ENCODE measurements at regions of chr6 and their contacts with region 1.

Region 1: DNA sequence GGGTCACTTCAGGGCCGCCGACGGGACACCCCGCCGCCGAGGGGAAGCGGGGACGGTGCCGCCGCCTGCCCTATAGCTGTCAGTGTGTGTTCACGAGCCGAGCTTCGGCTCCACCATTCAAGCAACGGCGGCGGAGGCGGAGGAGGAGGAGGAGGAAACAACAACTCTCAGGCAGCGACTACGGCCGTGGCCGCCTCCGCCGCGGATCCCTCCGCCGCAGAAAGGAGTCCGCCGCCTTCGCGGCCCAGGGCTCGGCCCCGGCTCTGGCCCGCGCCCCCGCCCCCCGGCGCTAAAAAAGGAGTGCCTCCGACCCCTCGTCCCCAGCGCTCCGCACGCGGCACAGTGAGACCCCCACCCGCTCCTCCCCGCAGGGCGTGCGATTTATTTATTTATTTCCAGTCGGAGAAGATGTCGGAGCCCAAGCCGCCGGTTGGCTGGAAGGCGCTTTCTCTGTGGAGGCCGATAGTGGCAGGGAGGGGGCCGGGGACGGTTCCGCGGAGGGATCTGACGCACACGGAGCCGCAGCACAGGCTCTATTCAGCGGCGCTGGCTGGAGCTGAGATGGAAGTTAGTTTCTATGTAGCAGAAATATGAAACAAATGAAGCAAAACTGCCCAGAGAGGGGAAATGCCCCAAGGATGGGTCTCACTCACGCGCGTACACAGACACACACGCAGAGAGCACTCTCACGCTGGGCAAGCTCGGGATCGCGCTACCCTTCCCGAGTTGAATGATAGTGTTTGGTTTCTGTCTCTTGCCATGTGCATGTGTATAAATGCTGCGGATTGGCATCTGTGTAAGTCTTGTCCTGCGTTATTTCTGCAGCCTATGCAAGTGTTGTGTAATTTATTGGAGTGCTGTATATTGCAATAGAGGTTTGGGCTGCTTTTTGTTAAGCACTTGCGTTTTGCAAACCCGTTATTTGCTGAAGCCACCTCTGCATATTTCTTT is at the start of gene PHIP:
- DNase-seq: peak; percentile 96
- H3K4me3 ChIP-seq: peak within 1 kb of the TSS; percentile 81 to 98 (median 90)
- H3K27ac ChIP-seq: peak within 1 kb of the TSS; percentile 84
- H3K4me1 ChIP-seq: peaks cover 20% of the 10 kb centered on the region
- H3K27me3 ChIP-seq: no peaks in the 10 kb centered on the region
- CTCF ChIP-seq: no peak
- POLR2A ChIP-seq: peak; percentile 70
- total RNA-seq, gene PHIP: 26.0 and 28.4 TPM in 2 replicates

Region 2: GRCh38 chr6:78850621-78851020 is 227.7 kb before region 1 on chr6:
- CTCF ChIA-PET with region 1: no interaction called
- POLR2A ChIA-PET with region 1: no interaction called
- dilution Hi-C with region 1: no loop called
- intact Hi-C with region 1: no loop called
- DNase-seq: no peak
- H3K4me3 ChIP-seq: no peak overlapping the region
- H3K27ac ChIP-seq: no peak overlapping the region
- H3K4me1 ChIP-seq: no peaks in the 10 kb centered on the region
- H3K27me3 ChIP-seq: no peaks in the 10 kb centered on the region
- CTCF ChIP-seq: no peak
- POLR2A ChIP-seq: no peak

Region 3: DNA sequence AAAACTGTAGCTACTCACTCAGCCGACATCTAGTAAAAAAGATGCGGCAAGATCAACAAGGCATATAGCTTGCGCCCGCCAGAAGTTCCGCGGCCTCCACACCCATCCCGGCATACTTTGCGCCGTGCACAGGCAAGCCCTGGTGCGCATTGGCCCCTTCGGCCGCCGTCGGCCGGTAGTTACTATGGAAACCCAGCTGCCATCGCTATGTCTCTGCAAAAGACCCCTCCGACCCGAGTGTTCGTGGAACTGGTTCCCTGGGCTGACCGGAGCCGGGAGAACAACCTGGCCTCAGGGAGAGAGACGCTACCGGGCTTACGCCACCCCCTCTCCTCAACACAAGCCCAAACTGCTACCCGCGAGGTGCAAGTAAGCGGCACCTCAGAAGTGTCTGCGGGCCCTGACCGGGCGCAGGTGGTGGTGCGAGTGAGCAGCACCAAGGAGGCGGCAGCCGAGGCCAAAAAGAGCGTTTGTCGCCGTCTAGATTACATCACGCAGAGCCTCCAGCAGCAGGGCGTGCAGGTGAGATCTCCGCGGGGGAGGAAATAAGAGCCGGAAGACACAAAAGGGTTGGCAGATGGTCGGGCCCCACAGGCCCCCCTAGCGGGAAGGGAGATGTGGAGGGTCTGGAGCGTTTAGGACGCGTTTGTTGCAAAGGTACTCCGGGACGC is 210.8 kb before region 1 on chr6 and contains the start of gene IRAK1BP1:
- CTCF ChIA-PET with region 1: no interaction called
- POLR2A ChIA-PET with region 1: no interaction called
- dilution Hi-C with region 1: no loop called
- intact Hi-C with region 1: loop called (anchors 1 kb)
- DNase-seq: peak; percentile 89
- H3K4me3 ChIP-seq: peak within 1 kb of the TSS; percentile 95 to 98 (median 95)
- H3K27ac ChIP-seq: peak within 1 kb of the TSS; percentile 58
- H3K4me1 ChIP-seq: peaks cover 8% of the 10 kb centered on the region
- H3K27me3 ChIP-seq: no peaks in the 10 kb centered on the region
- CTCF ChIP-seq: peak; percentile 16 to 46
- POLR2A ChIP-seq: peak; percentile 81
- total RNA-seq, gene IRAK1BP1: 2.7 and 3.0 TPM in 2 replicates

Region 4: GRCh38 chr6:79421707-79422484 is 343.5 kb after region 1 on chr6:
- CTCF ChIA-PET with region 1: no interaction called
- POLR2A ChIA-PET with region 1: no interaction called
- dilution Hi-C with region 1: no loop called
- intact Hi-C with region 1: loop called (anchors 1 kb)
- DNase-seq: peak; percentile 99
- H3K4me3 ChIP-seq: no peak overlapping the region
- H3K27ac ChIP-seq: peak overlapping the region; percentile 24
- H3K4me1 ChIP-seq: peaks cover 17% of the 10 kb centered on the region
- H3K27me3 ChIP-seq: no peaks in the 10 kb centered on the region
- CTCF ChIP-seq: no peak
- POLR2A ChIP-seq: no peak

Region 5: GRCh38 chr6:79544939-79545450 is 466.6 kb after region 1 on chr6:
- CTCF ChIA-PET with region 1: interaction called, 7 read pairs
- POLR2A ChIA-PET with region 1: no interaction called
- dilution Hi-C with region 1: no loop called
- intact Hi-C with region 1: loop called (anchors 2 kb)
- DNase-seq: peak; percentile 99
- H3K4me3 ChIP-seq: no peak overlapping the region
- H3K27ac ChIP-seq: peak overlapping the region; percentile 86
- H3K4me1 ChIP-seq: peaks cover 24% of the 10 kb centered on the region
- H3K27me3 ChIP-seq: no peaks in the 10 kb centered on the region
- CTCF ChIP-seq: peak; percentile 60 to 62
- POLR2A ChIP-seq: peak; percentile 28

Region 6: DNA sequence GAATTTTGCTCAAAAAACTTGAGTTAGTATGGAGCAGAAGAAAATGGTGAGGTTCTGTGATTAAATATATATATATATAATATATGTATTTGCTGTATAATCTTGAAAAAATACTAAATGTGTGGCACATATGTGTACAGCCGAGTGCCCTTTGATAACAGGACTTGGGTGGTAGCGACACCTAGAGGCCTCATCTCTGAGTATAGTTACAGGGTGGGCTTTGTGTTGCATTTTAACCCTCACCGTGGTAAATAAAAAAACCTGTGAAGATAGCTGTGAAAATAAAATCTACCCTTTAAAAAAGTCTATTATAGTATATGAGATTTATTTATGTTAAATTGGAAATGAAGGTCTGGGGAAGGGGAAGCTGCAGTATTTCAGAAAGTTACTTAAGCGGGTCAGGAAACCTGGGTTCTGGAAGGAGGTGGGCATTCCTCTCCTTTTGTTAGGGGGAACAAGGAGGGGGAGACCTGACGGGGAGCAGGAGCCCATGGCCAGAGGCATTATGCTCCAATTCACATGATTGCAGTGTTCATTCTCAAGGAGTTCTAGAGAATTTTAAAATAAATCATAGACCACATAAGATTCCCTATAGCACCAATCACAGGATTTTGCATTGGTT is 635.5 kb after region 1 on chr6:
- CTCF ChIA-PET with region 1: no interaction called
- POLR2A ChIA-PET with region 1: no interaction called
- dilution Hi-C with region 1: no loop called
- intact Hi-C with region 1: loop called (anchors 1 kb)
- DNase-seq: peak; percentile 64
- H3K4me3 ChIP-seq: no peak overlapping the region
- H3K27ac ChIP-seq: no peak overlapping the region
- H3K4me1 ChIP-seq: no peaks in the 10 kb centered on the region
- H3K27me3 ChIP-seq: no peaks in the 10 kb centered on the region
- CTCF ChIP-seq: peak; percentile 51 to 62
- POLR2A ChIP-seq: no peak

Region 7: GRCh38 chr6:79841577-79842375 is 763.4 kb after region 1 on chr6:
- CTCF ChIA-PET with region 1: no interaction called
- POLR2A ChIA-PET with region 1: no interaction called
- dilution Hi-C with region 1: no loop called
- intact Hi-C with region 1: no loop called
- DNase-seq: no peak
- H3K4me3 ChIP-seq: no peak overlapping the region
- H3K27ac ChIP-seq: no peak overlapping the region
- H3K4me1 ChIP-seq: no peaks in the 10 kb centered on the region
- H3K27me3 ChIP-seq: peaks cover 0 to 3% of the 10 kb centered on the region in 2 experiments
- CTCF ChIP-seq: peak in 1 of 2 donors; percentile 1
- POLR2A ChIP-seq: no peak

Region 8: DNA sequence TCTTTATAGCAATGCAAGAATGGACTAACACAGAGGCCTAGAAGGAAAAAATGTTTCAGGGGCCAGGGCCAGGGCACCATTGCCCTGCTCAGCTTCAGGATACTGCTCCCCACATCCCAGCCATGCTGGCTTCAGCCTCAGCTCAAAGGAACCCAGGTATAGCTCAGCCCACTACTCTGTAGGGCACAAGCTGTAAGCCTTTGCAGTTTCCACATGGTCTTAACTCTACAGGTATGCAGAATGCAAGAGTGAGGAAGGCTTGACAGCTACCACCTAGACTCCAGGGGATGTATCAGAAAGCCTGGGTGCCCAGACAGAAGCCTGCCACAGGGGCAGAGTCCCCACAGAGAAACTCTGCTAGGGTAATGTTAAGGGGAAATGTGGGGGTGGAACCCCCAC is 915.6 kb after region 1 on chr6:
- CTCF ChIA-PET with region 1: no interaction called
- POLR2A ChIA-PET with region 1: no interaction called
- dilution Hi-C with region 1: no loop called
- intact Hi-C with region 1: no loop called
- DNase-seq: no peak
- H3K4me3 ChIP-seq: no peak overlapping the region
- H3K27ac ChIP-seq: no peak overlapping the region
- H3K4me1 ChIP-seq: no peaks in the 10 kb centered on the region
- H3K27me3 ChIP-seq: peaks cover 11 to 18% of the 10 kb centered on the region in 2 experiments
- CTCF ChIP-seq: no peak
- POLR2A ChIP-seq: no peak